Pancreas (tissue), 10 donors: ENCODE measurements at regions of chr10 and their contacts with region 1.

Region 1: DNA sequence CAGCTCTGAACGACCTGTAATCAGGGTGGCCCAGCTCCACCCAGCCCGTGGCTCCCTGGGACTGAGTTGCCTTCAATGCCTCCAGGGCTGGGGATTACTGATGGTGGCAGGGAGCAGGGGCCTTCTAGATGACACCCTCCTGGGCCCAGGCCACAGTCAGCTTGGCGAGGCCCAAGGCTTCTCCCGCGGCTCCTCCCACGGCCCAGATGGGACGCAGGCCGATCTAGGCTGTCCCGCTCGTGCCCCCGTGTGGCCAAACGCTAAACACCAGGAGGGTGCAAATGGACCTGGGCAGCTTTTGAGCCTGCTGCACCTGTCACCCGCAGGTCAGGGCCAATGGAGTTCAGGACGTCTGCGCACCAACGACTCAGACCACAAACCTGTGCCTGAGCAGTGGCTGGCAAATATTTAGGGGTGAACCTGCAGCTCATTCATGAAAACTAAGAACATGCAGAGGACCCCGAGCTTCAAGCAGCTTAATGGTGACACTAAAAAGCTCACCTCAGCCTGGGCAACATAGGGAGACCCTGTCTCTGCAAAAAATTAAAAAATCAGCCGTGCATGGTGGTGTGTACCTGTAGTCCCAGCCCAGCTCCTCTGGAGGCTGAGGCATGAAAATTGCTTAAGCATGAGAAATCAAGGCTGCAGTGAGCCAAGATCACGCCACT is 43.2 kb downstream of the ASB13 start:
- DNase-seq: peak; percentile 89 to 97 (median 95)
- ATAC-seq: peak; percentile 70 to 87 (median 77)
- H3K4me3 ChIP-seq: no peak overlapping the region
- H3K27ac ChIP-seq: no peak overlapping the region
- H3K4me1 ChIP-seq: peaks cover 22 to 30% (median 24%) of the 10 kb centered on the region in 3 donors
- H3K27me3 ChIP-seq: no peaks in the 10 kb centered on the region
- CTCF ChIP-seq: peak; percentile 76 to 92 (median 84)

Region 2: GRCh38 chr10:5442065-5442989 is 180.9 kb before region 1 on chr10:
- intact Hi-C with region 1: loop called in 2 of 3 experiments (anchors 5 kb)
- DNase-seq: peak in 2 of 6 donors; percentile 21 to 37
- ATAC-seq: peak in 3 of 4 donors; percentile 27 to 44 (median 36)
- H3K4me3 ChIP-seq: no peak overlapping the region
- H3K27ac ChIP-seq: no peak overlapping the region
- H3K4me1 ChIP-seq: peaks cover 10 to 15% (median 14%) of the 10 kb centered on the region in 3 donors
- H3K27me3 ChIP-seq: no peaks in the 10 kb centered on the region
- CTCF ChIP-seq: peak; percentile 33 to 72 (median 64)

Region 3: GRCh38 chr10:5710859-5711258 is 87.6 kb after region 1 on chr10:
- intact Hi-C with region 1: no loop called
- DNase-seq: no peak
- ATAC-seq: no peak
- H3K4me3 ChIP-seq: no peak overlapping the region
- H3K27ac ChIP-seq: no peak overlapping the region
- H3K4me1 ChIP-seq: peaks cover 0 to 11% (median 0%) of the 10 kb centered on the region in 3 donors
- H3K27me3 ChIP-seq: no peaks in the 10 kb centered on the region
- CTCF ChIP-seq: no peak

Region 4: DNA sequence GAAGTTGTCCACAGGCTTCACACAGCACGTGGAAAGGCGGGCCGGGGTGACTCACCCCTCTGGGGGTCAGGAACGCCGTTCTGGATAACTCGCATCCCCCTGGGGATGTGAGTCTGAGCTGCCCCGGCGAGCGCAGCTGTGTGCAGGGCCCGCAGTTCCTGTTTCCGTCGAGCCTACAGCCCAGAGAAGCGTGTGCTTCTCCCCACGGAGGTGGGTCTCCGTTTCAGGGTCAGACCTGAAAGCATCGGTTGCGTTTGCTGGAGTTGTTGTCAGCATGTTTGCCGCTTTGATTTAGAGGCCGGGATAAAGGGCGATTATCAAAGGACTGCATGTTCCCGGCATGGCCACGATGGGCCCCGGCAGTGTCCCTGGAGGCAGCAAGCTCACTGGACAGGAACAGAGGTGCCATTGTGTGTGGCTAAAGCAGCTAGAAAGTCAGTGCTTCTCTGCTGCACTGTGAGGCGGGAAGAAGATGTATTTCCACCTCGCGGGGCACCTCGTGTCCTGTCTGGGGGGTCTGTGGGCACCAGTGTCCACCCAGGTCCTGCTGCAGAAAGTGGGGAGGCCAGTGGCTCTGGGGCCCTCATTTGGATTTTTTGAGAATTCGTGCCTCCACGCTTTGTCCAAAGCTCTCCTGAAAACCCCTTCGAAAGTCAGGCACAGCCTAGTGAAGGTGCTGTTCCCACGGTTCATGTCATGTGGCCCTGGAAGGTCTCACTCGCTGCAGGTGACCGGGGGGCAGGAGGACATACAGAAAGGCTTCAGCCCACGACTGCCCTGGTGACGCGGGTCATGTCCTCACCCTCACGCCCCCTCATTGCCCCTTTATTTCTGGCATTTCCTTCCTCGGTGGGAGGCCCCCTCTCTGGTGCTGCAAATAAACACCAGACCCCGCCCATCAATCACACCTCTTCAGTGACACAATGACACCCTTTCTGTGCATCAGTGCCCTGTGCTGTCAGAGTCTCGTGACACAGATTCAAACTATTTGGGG is 217.4 kb after region 1 on chr10:
- intact Hi-C with region 1: no loop called
- DNase-seq: no peak
- ATAC-seq: peak in 3 of 4 donors; percentile 30 to 67 (median 34)
- H3K4me3 ChIP-seq: no peak overlapping the region
- H3K27ac ChIP-seq: no peak overlapping the region
- H3K4me1 ChIP-seq: no peaks in the 10 kb centered on the region
- H3K27me3 ChIP-seq: no peaks in the 10 kb centered on the region
- CTCF ChIP-seq: no peak